ENCODE measurements at regions of chr13 and their contacts with region 1.

Region 1: DNA sequence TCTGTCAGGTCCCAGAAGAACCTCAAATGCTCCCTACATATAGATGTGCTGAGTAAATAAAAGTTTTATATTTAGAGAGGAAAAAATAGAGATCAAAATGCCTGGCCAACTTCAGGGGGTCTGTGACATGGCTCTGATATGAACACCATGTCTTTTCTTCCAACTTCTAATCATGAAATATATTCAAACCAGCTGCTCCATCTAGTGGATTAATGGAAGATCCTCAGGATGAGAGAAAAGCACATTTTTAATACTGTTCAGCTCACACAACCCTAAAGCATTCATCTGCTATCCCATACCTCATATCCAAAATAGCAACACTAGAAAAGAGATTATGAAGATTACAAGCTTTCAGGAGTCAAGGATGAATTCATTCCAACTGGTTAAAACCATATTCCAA is 56.0 kb upstream of the DOCK9 start:
- DNase-seq: no peak
- H3K4me3 ChIP-seq: no peak overlapping the region
- H3K27ac ChIP-seq: no peak overlapping the region
- H3K4me1 ChIP-seq: 0 out of 7 replicates have a peak, but pooled peaks cover 0 to 1% (median 0%) of the 10 kb centered on the region in 4 experiments
- H3K27me3 ChIP-seq: peaks cover 0 to 1% (median 0%) of the 10 kb centered on the region in 4 experiments; a peak in 1 of 7 replicates
- CTCF ChIP-seq: peak in 2 of 3 experiments; percentile 38 to 50; a peak in 2 of 4 replicates
- EP300 ChIP-seq: no peak
- POLR2A ChIP-seq: no peak
- RAD21 ChIP-seq: peak; percentile 75 to 77

Region 2: GRCh38 chr13:98842864-98843481 is 190.8 kb before region 1 on chr13:
- CTCF ChIA-PET with region 1: interaction called, 10 read pairs
- POLR2A ChIA-PET with region 1: no interaction called
- DNase-seq: peak in 1 of 2 experiments; percentile 87
- H3K4me3 ChIP-seq: no peak overlapping the region
- H3K27ac ChIP-seq: no peak overlapping the region
- H3K4me1 ChIP-seq: peaks cover 0 to 2% (median under 1%) of the 10 kb centered on the region in 4 experiments; a peak in 3 of 7 replicates
- H3K27me3 ChIP-seq: no peaks in the 10 kb centered on the region
- CTCF ChIP-seq: peak; percentile 73 to 89 (median 81)
- EP300 ChIP-seq: no peak
- POLR2A ChIP-seq: no peak
- RAD21 ChIP-seq: peak; percentile 91 to 93

Region 3: GRCh38 chr13:98965325-98965724 is 68.5 kb before region 1 on chr13:
- CTCF ChIA-PET with region 1: interaction called, 10 read pairs
- POLR2A ChIA-PET with region 1: no interaction called
- DNase-seq: no peak
- H3K4me3 ChIP-seq: no peak overlapping the region
- H3K27ac ChIP-seq: no peak overlapping the region
- H3K4me1 ChIP-seq: no peaks in the 10 kb centered on the region
- H3K27me3 ChIP-seq: peaks cover 0 to 2% (median 0%) of the 10 kb centered on the region in 4 experiments; a peak in 1 of 7 replicates
- CTCF ChIP-seq: no peak
- EP300 ChIP-seq: no peak
- POLR2A ChIP-seq: no peak
- RAD21 ChIP-seq: no peak

Region 4: DNA sequence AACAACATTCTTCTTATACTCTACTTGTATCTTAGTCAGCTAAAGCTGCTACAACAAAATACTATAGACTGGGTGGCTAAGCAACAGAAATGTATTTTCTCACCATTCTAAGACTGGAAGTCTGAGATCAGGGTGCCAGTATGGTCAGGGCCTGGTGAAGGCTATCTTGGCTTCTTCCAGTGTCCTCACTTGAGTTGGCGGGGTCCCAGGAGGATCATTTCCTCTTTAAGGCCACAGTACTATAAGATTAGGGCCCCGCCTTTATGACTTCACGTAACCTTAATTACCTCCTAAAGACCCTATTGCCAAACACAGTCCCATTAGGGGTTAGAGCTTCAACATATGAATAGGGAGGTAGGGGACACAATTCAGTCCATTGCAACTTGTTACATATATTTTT is 25.2 kb before region 1 on chr13:
- CTCF ChIA-PET with region 1: interaction called, 10 read pairs
- POLR2A ChIA-PET with region 1: no interaction called
- DNase-seq: no peak
- H3K4me3 ChIP-seq: no peak overlapping the region
- H3K27ac ChIP-seq: no peak overlapping the region
- H3K4me1 ChIP-seq: no peaks in the 10 kb centered on the region
- H3K27me3 ChIP-seq: no peaks in the 10 kb centered on the region
- CTCF ChIP-seq: no peak
- EP300 ChIP-seq: no peak
- POLR2A ChIP-seq: no peak
- RAD21 ChIP-seq: no peak

Region 5: DNA sequence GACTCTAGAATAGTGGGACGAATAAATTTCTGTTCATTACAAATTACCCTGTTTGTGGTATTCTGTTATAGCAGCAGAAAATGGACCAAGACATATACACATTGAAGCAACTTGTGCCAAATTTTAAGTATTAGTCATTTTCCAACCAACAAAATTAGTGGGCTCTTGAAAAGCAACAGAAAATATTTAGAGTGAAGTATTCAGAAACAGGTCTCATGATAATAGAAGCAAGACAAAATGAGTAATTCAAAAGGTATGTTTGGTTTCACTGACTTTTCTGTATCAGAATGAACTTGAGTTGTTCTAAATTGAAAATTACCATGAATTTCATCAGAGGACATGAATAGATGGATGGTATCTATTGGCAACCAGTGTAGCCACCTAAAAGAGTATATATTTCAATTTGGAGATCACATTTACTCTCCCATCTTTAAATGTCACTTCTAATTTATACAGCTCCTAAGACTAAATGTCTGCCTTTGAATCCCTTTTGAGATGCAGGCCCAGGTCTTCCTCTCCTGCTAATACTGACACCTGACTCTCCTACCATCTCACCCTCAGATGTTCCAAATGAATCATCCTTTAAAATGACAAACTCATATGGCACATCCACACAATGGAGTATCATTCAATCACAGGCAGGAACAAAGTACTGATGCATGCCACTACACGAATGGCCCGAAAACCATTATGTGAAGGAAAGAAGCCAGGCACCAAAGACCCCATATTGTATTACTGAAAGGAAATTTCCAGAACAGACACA is 15.2 kb before region 1 on chr13:
- CTCF ChIA-PET with region 1: interaction called, 13 read pairs
- POLR2A ChIA-PET with region 1: no interaction called
- DNase-seq: no peak
- H3K4me3 ChIP-seq: no peak overlapping the region
- H3K27ac ChIP-seq: no peak overlapping the region
- H3K4me1 ChIP-seq: peaks cover 0 to 3% (median 1%) of the 10 kb centered on the region in 4 experiments; a peak in 3 of 7 replicates
- H3K27me3 ChIP-seq: no peaks in the 10 kb centered on the region
- CTCF ChIP-seq: no peak
- EP300 ChIP-seq: no peak
- POLR2A ChIP-seq: no peak
- RAD21 ChIP-seq: no peak

Region 6: DNA sequence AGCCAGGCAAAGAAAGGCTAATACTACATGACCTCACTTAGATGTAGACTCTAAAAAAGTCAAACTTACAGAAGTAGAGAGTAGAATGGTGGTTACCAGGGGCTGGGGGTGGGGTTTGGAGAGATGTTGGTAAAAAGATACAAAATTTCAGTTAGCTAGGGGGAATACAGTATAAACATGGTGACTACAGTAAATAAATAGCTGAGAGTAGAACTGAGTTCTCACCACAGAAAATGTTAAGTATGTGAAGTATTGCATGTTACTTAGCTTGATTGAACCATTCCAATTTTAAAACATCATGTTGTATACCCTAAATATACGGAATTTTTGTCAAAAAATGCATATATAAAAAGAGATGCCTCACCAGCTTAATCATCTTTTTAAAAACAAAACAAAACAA is 11.6 kb after region 1 on chr13:
- CTCF ChIA-PET with region 1: interaction called, 12 read pairs
- POLR2A ChIA-PET with region 1: no interaction called
- DNase-seq: no peak
- H3K4me3 ChIP-seq: no peak overlapping the region
- H3K27ac ChIP-seq: no peak overlapping the region
- H3K4me1 ChIP-seq: peaks cover 0 to 4% (median 0%) of the 10 kb centered on the region in 4 experiments; a peak in 1 of 7 replicates
- H3K27me3 ChIP-seq: no peaks in the 10 kb centered on the region
- CTCF ChIP-seq: no peak
- EP300 ChIP-seq: no peak
- POLR2A ChIP-seq: no peak
- RAD21 ChIP-seq: no peak

Region 7: GRCh38 chr13:99501184-99501847 is 467.5 kb after region 1 on chr13 and contains the start of gene TM9SF2:
- CTCF ChIA-PET with region 1: no interaction called
- POLR2A ChIA-PET with region 1: no interaction called
- DNase-seq: peak; percentile 93 to 100
- H3K4me3 ChIP-seq: peak within 1 kb of the TSS; percentile 87 to 98 (median 95)
- H3K27ac ChIP-seq: peak within 1 kb of the TSS; percentile 77
- H3K4me1 ChIP-seq: peaks cover 0 to 5% (median 0%) of the 10 kb centered on the region in 4 experiments; a peak in 4 of 7 replicates
- H3K27me3 ChIP-seq: no peaks in the 10 kb centered on the region
- CTCF ChIP-seq: no peak
- EP300 ChIP-seq: no peak
- POLR2A ChIP-seq: peak; percentile 59 to 63; a peak in 2 of 3 replicates
- RAD21 ChIP-seq: no peak
- total RNA-seq, gene TM9SF2: 93.3 and 101 TPM in 2 replicates